Right lobe of liver (tissue), 6 donors: ENCODE measurements at regions of chr21 and their contacts with region 1.

Region 1: GRCh38 chr21:26170471-26171257 is at the start of gene APP:
- DNase-seq: peak; percentile 89 to 90 (median 89)
- ATAC-seq: peak; percentile 78 to 89 (median 87)
- H3K4me3 ChIP-seq: peak within 1 kb of the TSS; percentile 72 to 90 (median 84)
- H3K27ac ChIP-seq: peak within 1 kb of the TSS; percentile 88 to 97 (median 96)
- H3K4me1 ChIP-seq: peaks cover 0 to 18% (median 8%) of the 10 kb centered on the region in 4 donors
- H3K27me3 ChIP-seq: no peaks in the 10 kb centered on the region
- CTCF ChIP-seq: peak; percentile 97 to 100 (median 99)
- POLR2A ChIP-seq: peak; percentile 95
- total RNA-seq, gene APP: 127 to 262 (median 208) TPM

Region 2: GRCh38 chr21:25881525-25882376 is 288.9 kb before region 1 on chr21:
- intact Hi-C with region 1: loop called in 1 of 2 experiments (anchors 10 kb)
- DNase-seq: peak; percentile 55 to 65 (median 62)
- ATAC-seq: peak; percentile 65 to 76 (median 74)
- H3K4me3 ChIP-seq: no peak overlapping the region
- H3K27ac ChIP-seq: no peak overlapping the region
- H3K4me1 ChIP-seq: peaks cover 0 to 18% (median 3%) of the 10 kb centered on the region in 4 donors
- H3K27me3 ChIP-seq: no peaks in the 10 kb centered on the region
- CTCF ChIP-seq: peak; percentile 86 to 95 (median 90)
- POLR2A ChIP-seq: no peak